OCI-LY7 (cell line): ENCODE measurements at regions of chr12 and their contacts with region 1.

Region 1: GRCh38 chr12:24991209-24992049 is 42.5 kb upstream of the BCAT1 start:
- DNase-seq: peak; percentile 90
- H3K4me3 ChIP-seq: no peak overlapping the region
- H3K27ac ChIP-seq: peak overlapping the region; percentile 73
- H3K4me1 ChIP-seq: peaks cover 58% of the 10 kb centered on the region
- CTCF ChIP-seq: peak; percentile 94

Region 2: DNA sequence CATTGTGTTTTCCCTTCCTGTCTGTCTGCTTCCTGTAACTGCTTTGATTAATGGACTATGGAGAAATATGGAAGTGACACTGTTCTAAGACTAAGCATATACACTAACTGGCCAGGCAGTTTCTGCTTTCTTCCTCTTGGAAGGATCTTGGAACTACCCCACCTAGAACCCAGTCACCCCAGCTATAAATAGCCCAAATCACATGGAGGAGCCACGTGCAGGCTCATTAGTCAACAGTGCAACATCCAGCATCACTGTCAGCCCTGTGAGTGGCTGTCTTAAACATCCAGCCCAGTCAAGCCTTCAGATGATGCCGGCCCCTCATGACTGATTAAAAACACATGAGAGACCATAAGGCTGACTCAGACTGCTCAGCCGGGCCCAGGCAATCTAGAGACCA is 81.8 kb before region 1 on chr12:
- CTCF ChIA-PET with region 1: no interaction called
- POLR2A ChIA-PET with region 1: no interaction called
- intact Hi-C with region 1: no loop called
- DNase-seq: no peak
- H3K4me3 ChIP-seq: no peak overlapping the region
- H3K27ac ChIP-seq: no peak overlapping the region
- H3K4me1 ChIP-seq: peaks cover 5% of the 10 kb centered on the region
- CTCF ChIP-seq: no peak

Region 3: DNA sequence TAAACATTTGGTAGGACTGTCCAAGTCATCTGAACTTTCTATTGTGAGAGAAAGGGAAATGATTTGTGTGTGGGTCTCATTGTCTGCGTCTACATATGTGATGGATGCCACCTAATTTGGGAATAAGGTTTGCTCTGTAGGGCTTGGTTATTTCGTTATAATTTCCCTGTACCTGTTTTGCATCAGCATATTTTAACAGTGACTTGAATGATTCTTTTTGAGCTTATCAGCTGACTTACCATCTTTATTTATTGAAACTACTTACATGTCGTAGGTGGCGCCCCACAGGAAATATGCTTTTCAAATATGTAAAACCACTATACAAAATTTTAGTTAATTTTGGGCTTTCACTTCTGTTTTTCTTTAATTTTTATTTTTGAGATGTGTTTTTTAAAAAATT is 13.9 kb after region 1 on chr12:
- CTCF ChIA-PET with region 1: no interaction called
- POLR2A ChIA-PET with region 1: interaction called, 49 read pairs
- intact Hi-C with region 1: no loop called
- DNase-seq: peak; percentile 76
- H3K4me3 ChIP-seq: peak overlapping the region; percentile 30
- H3K27ac ChIP-seq: peak overlapping the region; percentile 90
- H3K4me1 ChIP-seq: peaks cover 86% of the 10 kb centered on the region
- CTCF ChIP-seq: peak; percentile 61

Region 4: GRCh38 chr12:25119020-25119419 is 127.6 kb after region 1 on chr12:
- CTCF ChIA-PET with region 1: no interaction called
- POLR2A ChIA-PET with region 1: interaction called, 10 read pairs
- intact Hi-C with region 1: loop called (anchors 1 kb)
- DNase-seq: peak; percentile 53
- H3K4me3 ChIP-seq: no peak overlapping the region
- H3K27ac ChIP-seq: no peak overlapping the region
- H3K4me1 ChIP-seq: peaks cover 7% of the 10 kb centered on the region
- CTCF ChIP-seq: peak; percentile 80